ENCODE measurements at regions of chr11 and their contacts with region 1.

Region 1: GRCh38 chr11:46308631-46309419 is 31.4 kb downstream of the CREB3L1 start:
- DNase-seq: peak; percentile 88
- ATAC-seq: peak; percentile 88
- H3K4me3 Mint-ChIP-seq: no peak overlapping the region
- H3K27ac Mint-ChIP-seq: no peak overlapping the region
- H3K4me1 Mint-ChIP-seq: peaks cover 5% of the 10 kb centered on the region
- H3K27me3 Mint-ChIP-seq: no peaks in the 10 kb centered on the region
- CTCF ChIP-seq: peak; percentile 92

Region 2: DNA sequence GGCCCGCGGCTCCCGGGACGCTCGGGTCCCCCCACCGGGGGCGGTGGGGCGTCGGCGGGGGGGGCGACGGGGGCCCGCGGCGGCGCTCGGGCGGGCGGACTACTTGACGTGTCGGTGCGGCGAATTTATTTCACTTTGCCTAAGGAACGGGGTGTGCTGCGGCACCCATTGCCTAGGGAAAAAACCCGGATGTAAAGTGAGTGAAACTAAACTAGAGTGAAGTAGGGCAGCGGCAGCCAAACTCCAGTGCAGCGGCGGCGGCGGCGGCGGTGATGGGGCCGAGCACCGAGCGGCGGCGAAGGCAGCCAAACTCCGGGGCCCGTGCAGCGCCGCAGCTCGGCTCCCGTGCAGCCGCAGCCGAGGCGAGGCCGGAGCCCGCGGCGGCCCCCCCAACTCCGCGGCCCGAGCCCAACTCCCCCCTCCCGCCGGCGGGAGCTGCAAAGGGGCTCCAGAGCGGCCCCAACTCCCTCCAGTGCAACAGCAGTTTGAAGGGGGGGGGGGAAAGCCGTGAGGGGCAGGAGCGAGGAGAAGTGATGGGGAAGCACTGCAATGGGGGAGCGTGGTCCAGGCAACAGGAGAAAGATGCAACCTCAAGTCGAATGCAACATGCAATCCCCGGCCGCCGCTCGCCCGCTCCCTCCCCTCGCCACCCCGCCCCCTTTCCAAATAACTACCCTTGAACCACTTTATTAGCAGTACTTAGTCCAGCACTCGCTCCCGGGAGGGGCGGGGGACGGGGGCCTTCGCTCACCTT is 186.9 kb before region 1 on chr11:
- CTCF ChIA-PET with region 1: interaction called, 3 read pairs
- POLR2A ChIA-PET with region 1: no interaction called
- intact Hi-C with region 1: loop called (anchors 10 kb)
- DNase-seq: peak; percentile 79
- ATAC-seq: peak; percentile 47
- H3K4me3 Mint-ChIP-seq: peak overlapping the region; percentile 79
- H3K27ac Mint-ChIP-seq: peak overlapping the region; percentile 90
- H3K4me1 Mint-ChIP-seq: peaks cover 33% of the 10 kb centered on the region
- H3K27me3 Mint-ChIP-seq: no peaks in the 10 kb centered on the region
- CTCF ChIP-seq: no peak

Region 3: GRCh38 chr11:46278387-46279125 is 30.3 kb before region 1 on chr11:
- CTCF ChIA-PET with region 1: interaction called, 13 read pairs
- POLR2A ChIA-PET with region 1: no interaction called
- intact Hi-C with region 1: no loop called
- DNase-seq: peak; percentile 64
- ATAC-seq: peak; percentile 74
- H3K4me3 Mint-ChIP-seq: peak overlapping the region; percentile 7
- H3K27ac Mint-ChIP-seq: no peak overlapping the region
- H3K4me1 Mint-ChIP-seq: peaks cover 4% of the 10 kb centered on the region
- H3K27me3 Mint-ChIP-seq: peaks cover 33% of the 10 kb centered on the region
- CTCF ChIP-seq: peak; percentile 55

Region 4: DNA sequence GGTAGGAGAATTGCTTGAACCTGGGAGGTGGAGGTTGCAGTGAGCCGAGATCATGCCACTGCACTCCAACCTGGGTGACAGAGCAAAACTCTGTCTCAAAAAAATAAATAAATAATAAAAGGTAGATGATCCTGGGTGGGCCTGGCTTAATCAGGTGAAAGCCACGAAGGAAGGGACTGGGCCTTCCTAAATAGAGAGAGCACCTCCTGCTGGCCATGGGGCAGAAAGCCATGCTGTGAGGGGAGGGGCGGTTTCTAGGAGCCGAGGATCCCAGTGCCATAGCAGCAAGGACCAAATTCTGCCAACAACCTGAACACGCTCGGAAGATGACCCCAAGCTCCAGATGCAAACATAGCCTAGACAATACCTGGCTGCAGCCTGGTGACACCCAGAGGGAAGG is 13.9 kb after region 1 on chr11:
- CTCF ChIA-PET with region 1: interaction called, 38 read pairs
- POLR2A ChIA-PET with region 1: no interaction called
- intact Hi-C with region 1: no loop called
- DNase-seq: peak; percentile 50
- ATAC-seq: peak; percentile 53
- H3K4me3 Mint-ChIP-seq: no peak overlapping the region
- H3K27ac Mint-ChIP-seq: no peak overlapping the region
- H3K4me1 Mint-ChIP-seq: peaks cover 11% of the 10 kb centered on the region
- H3K27me3 Mint-ChIP-seq: no peaks in the 10 kb centered on the region
- CTCF ChIP-seq: no peak

Region 5: DNA sequence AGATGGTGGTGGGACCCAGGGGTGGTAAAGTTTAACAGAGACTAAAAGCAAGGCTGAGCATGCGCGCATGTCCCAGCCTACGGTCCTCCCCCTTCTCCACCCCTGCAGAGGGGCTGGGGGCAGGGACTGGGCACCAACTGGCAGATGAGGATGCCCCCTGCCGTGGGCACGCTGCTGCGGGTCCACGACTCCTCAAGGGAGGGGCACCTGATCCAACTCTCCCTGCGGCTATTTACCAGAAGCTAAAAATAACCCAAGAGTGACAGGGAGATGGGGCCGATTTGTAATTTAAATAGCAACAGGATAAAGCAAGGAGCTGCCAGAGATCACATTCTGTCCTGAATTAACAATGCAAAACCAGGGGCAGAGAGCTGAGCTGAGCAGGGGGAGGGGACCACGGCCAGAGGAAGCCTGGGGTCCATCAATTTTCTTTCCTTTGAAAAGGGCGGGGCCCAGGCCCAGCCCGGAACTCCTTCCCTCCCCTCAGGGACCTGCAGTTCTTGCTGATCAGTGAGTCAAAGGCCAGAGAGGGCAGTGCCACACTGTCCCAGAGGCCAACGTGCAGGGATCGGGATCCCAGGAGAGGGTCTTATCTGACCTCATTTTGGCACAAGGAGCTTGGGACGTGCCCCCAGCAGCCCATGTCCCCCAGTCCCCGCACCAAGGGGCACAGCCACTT is 30.3 kb after region 1 on chr11:
- CTCF ChIA-PET with region 1: interaction called, 15 read pairs
- POLR2A ChIA-PET with region 1: no interaction called
- intact Hi-C with region 1: no loop called
- DNase-seq: no peak
- ATAC-seq: no peak
- H3K4me3 Mint-ChIP-seq: no peak overlapping the region
- H3K27ac Mint-ChIP-seq: no peak overlapping the region
- H3K4me1 Mint-ChIP-seq: peaks cover 39% of the 10 kb centered on the region
- H3K27me3 Mint-ChIP-seq: no peaks in the 10 kb centered on the region
- CTCF ChIP-seq: no peak

Measured in activated CD8-positive, alpha-beta T cell treated with anti-CD3 and anti-CD28 coated beads for 36 hours (primary cell).